ENCODE measurements at regions of chr10 and their contacts with region 1.

Region 1: GRCh38 chr10:6348096-6348874 is 145.6 kb downstream of the PFKFB3 start:
- DNase-seq: peak; percentile 62
- H3K4me3 Mint-ChIP-seq: peak overlapping the region; percentile 74
- H3K27ac Mint-ChIP-seq: peak overlapping the region; percentile 96
- H3K4me1 Mint-ChIP-seq: peaks cover 50% of the 10 kb centered on the region
- H3K27me3 Mint-ChIP-seq: no peaks in the 10 kb centered on the region

Region 2: DNA sequence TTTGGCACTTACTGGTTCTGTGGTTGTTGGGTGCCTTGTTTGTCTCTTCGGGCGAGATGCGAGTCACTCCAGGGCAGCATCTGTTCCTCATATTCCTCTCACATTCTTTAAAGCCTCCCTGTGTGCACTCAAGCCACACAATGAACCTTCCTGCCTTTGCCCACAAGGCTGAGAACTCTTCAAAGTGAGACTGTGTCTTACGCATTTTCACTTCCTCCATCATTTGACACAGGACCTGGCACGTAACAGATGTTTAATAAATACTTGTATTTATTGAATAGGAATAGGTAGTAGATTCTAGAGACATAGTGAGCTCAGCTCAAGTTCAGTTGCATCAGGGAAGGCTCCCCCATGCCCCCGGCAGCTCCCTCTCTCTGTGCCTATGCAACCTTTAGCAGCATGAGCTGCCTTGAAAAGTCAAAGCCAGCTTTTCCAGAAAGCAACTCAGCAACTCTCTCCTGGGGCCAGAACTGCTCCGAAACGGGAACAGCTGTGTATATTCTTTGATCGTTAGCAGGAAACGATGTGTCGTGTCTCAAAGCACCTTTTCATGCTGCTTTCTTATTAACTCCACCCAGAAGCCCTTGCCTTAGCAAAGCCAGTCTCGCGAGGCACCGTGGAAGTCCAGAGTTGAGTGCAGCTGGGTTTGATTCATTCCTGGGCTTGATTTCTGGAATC is 48.0 kb before region 1 on chr10:
- intact Hi-C with region 1: loop called (anchors 1 kb)
- DNase-seq: no peak
- H3K4me3 Mint-ChIP-seq: peak overlapping the region; percentile 6
- H3K27ac Mint-ChIP-seq: peak overlapping the region; percentile 56
- H3K4me1 Mint-ChIP-seq: peaks cover 60% of the 10 kb centered on the region
- H3K27me3 Mint-ChIP-seq: no peaks in the 10 kb centered on the region

Region 3: GRCh38 chr10:6310977-6311376 is 37.3 kb before region 1 on chr10:
- intact Hi-C with region 1: loop called (anchors 1 kb)
- DNase-seq: no peak
- H3K4me3 Mint-ChIP-seq: no peak overlapping the region
- H3K27ac Mint-ChIP-seq: no peak overlapping the region
- H3K4me1 Mint-ChIP-seq: peaks cover 12% of the 10 kb centered on the region
- H3K27me3 Mint-ChIP-seq: peaks cover 2% of the 10 kb centered on the region

Measured in activated T-helper 1 cell treated with anti-CD3 and anti-CD28 coated beads, Interleukin-12 subunit alpha, Interleukin-12 subunit beta, Interleukin-2, Interleukin-4 antibody, amounts not matched to agents 30 ng/mL and 10 ng/mL and 1 ng/mL, durations not matched to agents 14 hours and 24 hours and 36 hours (primary cell).